Natural killer cell (primary cell): ENCODE measurements at regions of chr19 and their contacts with region 1.

Region 1: GRCh38 chr19:44770550-44771257 is 7.0 kb upstream of the CBLC start:
- DNase-seq: peak; percentile 92 to 100
- ATAC-seq: peak; percentile 99 to 100 (median 99)
- H3K4me3 ChIP-seq: no peak overlapping the region
- H3K4me3 Mint-ChIP-seq: peak overlapping the region; percentile 59
- H3K27ac ChIP-seq: no peak overlapping the region
- H3K27ac Mint-ChIP-seq: peak overlapping the region; percentile 82 to 85
- H3K4me1 ChIP-seq: peaks cover 23% of the 10 kb centered on the region
- H3K4me1 Mint-ChIP-seq: peaks cover 9 to 24% of the 10 kb centered on the region in 2 donors
- H3K27me3 ChIP-seq: no peaks in the 10 kb centered on the region
- H3K27me3 Mint-ChIP-seq: no peaks in the 10 kb centered on the region
- CTCF ChIP-seq: peak; percentile 86

Region 2: DNA sequence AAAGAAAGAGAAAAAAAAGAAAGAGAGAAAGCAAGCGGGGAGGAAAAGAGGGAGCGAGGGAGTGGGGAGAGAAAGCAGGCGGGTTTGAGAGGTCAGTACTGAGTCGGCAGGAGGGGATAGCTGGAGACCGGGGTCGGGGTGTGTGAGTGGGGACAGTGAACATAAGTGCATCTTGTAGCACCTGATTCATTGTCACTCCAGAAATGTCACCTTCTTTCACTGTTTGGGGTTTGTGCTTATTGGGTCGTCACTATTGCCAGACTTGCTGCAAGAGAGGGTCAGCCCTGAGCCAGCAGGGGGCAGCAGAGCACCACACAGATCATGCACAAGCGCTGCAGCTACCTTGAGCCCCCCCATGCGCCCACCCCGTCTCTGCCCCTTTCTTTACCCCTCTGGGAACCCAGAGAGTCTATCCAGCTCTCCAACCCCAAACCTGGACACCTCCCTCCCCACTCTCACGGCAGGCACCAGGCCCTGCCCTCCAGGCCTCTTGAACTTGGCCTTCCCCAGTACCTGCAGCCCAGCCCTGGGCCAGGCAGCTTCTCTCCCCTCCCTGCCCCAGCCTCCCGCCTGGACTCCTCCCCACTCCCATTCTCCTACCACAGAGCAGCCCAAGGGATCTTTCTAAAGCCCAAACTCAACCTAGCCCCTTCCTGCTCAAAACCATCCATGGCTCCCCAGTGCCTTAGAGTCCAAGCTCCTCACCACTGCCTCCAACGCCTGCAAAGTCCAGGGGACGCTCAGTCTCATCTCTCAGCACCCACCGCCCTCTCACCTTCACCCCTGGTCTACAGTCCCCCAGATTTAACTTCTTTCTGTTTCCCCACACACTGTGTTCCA is 81.4 kb before region 1 on chr19:
- intact Hi-C with region 1: loop called (anchors 1 kb)
- DNase-seq: peak; percentile 69 to 88
- ATAC-seq: peak; percentile 49 to 72 (median 71)
- H3K4me3 ChIP-seq: no peak overlapping the region
- H3K4me3 Mint-ChIP-seq: no peak overlapping the region
- H3K27ac ChIP-seq: no peak overlapping the region
- H3K27ac Mint-ChIP-seq: peak overlapping the region in 1 of 2 donors; percentile 51
- H3K4me1 ChIP-seq: peaks cover 32% of the 10 kb centered on the region
- H3K4me1 Mint-ChIP-seq: peaks cover 0 to 28% of the 10 kb centered on the region in 2 donors
- H3K27me3 ChIP-seq: no peaks in the 10 kb centered on the region
- H3K27me3 Mint-ChIP-seq: peaks cover 3 to 6% of the 10 kb centered on the region in 2 donors
- CTCF ChIP-seq: peak; percentile 86

Region 3: DNA sequence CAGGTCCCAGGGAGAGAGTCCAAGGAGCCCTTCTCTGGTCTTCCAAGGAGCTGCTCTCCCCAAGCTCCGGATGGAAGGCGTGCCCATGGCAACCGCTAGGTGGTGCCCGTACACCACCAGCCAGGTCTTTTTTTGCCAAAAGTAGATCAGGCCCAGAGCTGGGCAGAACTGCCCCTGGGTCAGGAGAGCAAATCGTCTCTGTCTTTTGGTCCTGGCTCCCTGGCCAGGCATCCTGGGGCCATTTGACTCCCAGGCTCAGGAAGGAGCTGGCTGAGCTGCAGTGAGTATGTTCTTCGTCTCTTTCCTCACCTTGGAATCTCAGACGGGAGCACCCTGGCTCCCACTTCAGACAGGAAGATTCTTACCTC is 46.8 kb before region 1 on chr19:
- intact Hi-C with region 1: loop called (anchors 1 kb)
- DNase-seq: peak; percentile 80 to 90
- ATAC-seq: peak; percentile 91 to 94 (median 92)
- H3K4me3 ChIP-seq: no peak overlapping the region
- H3K4me3 Mint-ChIP-seq: no peak overlapping the region
- H3K27ac ChIP-seq: no peak overlapping the region
- H3K27ac Mint-ChIP-seq: peak overlapping the region in 1 of 2 donors; percentile 6
- H3K4me1 ChIP-seq: peaks cover 48% of the 10 kb centered on the region
- H3K4me1 Mint-ChIP-seq: peaks cover 9 to 22% of the 10 kb centered on the region in 2 donors
- H3K27me3 ChIP-seq: peaks cover 2% of the 10 kb centered on the region
- H3K27me3 Mint-ChIP-seq: peaks cover 0 to 7% of the 10 kb centered on the region in 2 donors
- CTCF ChIP-seq: peak; percentile 98

Region 4: GRCh38 chr19:44746946-44747738 is 23.6 kb before region 1 on chr19:
- intact Hi-C with region 1: loop called (anchors 1 kb)
- DNase-seq: peak; percentile 90 to 96
- ATAC-seq: peak; percentile 67 to 79 (median 74)
- H3K4me3 ChIP-seq: peak overlapping the region; percentile 57
- H3K4me3 Mint-ChIP-seq: peak overlapping the region; percentile 89
- H3K27ac ChIP-seq: peak overlapping the region; percentile 87
- H3K27ac Mint-ChIP-seq: peak overlapping the region; percentile 88 to 93
- H3K4me1 ChIP-seq: peaks cover 59% of the 10 kb centered on the region
- H3K4me1 Mint-ChIP-seq: peaks cover 29 to 64% of the 10 kb centered on the region in 2 donors
- H3K27me3 ChIP-seq: no peaks in the 10 kb centered on the region
- H3K27me3 Mint-ChIP-seq: no peaks in the 10 kb centered on the region
- CTCF ChIP-seq: no peak

Region 5: DNA sequence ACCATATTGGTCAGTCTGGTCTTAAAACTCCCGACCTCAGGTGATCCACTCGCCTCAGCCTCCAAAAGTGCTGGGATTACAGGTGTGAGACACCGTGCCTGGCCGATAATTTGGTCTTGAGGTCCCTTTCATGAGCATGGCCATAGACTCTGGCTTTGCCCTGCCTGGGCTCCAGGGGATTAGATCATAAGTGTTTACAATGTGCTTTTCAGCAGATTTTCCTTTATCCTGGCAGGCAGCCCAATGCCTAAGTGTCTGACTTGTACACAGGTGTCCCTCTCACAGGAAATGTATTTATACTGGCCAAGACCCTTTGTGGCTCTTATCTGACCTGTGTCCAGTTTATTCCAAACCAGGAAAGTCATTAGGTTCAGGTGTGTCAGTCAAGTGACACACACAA is 54.1 kb after region 1 on chr19:
- intact Hi-C with region 1: no loop called
- DNase-seq: no peak
- ATAC-seq: no peak
- H3K4me3 ChIP-seq: no peak overlapping the region
- H3K4me3 Mint-ChIP-seq: no peak overlapping the region
- H3K27ac ChIP-seq: no peak overlapping the region
- H3K27ac Mint-ChIP-seq: no peak overlapping the region
- H3K4me1 ChIP-seq: no peaks in the 10 kb centered on the region
- H3K4me1 Mint-ChIP-seq: no peaks in the 10 kb centered on the region
- H3K27me3 ChIP-seq: no peaks in the 10 kb centered on the region
- H3K27me3 Mint-ChIP-seq: peaks cover 0 to 15% of the 10 kb centered on the region in 2 donors
- CTCF ChIP-seq: no peak